ENCODE measurements at regions of chr11 and their contacts with region 1.

Region 1: DNA sequence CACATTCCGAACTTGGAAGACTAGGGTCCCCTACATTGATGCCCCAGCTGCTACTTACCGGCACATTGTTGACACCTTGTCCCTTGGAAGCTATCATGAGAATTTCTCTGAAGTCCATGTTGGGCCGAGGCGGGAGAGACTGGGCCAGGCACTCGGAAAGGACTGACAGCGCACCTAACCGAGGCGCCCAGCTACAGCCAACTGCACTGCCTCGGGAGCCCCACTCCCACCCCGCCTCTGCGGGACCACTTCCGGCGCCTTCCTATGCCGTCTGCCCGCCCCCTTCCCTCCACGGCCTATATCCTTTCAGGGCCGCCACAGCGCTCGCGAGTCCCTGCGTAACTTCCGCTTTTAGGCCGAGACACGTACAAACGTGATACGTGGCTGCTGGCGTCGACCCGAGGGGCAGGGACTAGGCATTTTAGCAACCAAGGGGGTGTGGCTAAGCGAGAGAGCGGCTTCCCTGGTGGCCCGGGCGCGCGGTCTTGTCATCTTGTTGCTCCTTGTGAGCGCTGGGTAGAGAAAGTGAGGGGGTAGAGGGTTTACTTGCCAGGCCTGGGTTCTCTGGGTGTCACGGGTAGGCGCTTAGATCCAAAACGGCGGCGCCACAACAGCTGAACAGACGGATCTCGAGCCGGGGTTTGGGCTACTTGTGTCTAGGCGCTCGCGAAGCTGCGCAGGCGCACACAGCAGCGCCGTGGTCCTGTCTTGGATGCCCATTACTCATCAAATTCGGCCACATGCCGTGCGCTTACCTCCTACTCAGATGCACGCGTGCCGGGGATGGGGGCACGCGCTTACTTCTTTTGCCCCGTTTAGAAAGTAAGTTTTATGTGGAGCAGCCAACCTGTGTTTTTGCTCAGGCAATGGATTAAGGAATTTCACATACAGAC is at the start of gene SPTY2D1:
- DNase-seq: peak; percentile 100
- ATAC-seq: peak; percentile 99
- total RNA-seq, gene SPTY2D1: 9.3 TPM

Region 2: GRCh38 chr11:18395735-18396504 is 238.5 kb before region 1 on chr11:
- intact Hi-C with region 1: loop called (anchors 10 kb)
- DNase-seq: peak; percentile 100
- ATAC-seq: peak; percentile 96

Region 3: GRCh38 chr11:18526521-18527296 is 107.7 kb before region 1 on chr11 and contains the start of gene TSG101:
- intact Hi-C with region 1: loop called (anchors 2 kb)
- DNase-seq: peak; percentile 97
- ATAC-seq: peak; percentile 99
- total RNA-seq, gene TSG101: 62.6 TPM

Region 4: DNA sequence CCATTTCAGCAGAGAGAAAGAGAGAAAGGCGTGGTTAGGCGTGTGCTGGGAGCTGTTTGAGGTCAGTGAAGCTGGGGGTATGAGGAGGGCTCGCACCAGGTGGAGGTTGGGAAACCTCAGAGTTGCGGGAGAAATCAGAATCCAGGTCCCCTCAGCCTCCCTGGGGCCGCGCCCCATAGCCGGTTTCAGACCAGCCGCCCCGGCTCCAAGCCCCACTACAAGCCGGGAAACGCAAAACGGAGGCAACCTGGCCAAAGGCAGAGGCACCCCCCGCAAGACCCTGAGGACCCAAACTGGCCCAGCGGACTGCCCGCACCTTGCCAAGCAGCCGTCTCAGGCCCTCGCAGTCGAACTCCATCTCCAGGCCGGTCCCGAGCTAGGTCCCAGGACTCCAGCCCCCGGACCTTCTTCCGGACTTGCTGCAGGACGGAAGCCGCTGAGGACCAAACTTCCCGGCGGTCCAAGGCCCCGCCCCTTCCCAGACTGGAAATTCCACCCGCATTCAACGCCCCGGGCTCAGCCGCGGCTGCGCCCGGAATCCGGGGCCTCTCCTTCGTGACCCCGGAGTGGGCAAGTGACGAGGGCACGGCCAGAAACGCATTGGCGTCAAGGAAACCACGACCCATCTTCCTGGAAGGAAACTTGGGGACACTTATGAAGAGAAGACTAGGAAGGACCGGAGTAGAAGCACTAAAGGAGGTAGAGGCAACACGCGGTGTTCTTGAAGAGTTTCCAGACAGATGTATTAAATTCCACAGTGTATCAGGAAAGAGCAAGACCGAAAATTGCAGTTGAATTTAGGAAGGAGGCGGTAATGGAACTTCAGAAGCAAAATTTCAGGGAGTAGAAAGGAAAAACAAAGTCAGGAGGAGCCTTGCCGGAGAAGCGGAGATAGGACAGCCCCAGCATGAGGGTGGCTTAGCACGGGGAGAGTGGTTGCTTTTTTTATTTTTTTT is 45.8 kb before region 1 on chr11 and contains the start of gene UEVLD:
- intact Hi-C with region 1: loop called (anchors 1 kb)
- DNase-seq: peak; percentile 93
- ATAC-seq: peak; percentile 98
- total RNA-seq, gene UEVLD: 18.0 TPM

Region 5: GRCh38 chr11:18599739-18600230 is 34.6 kb before region 1 on chr11 and contains the start of gene MISFA:
- intact Hi-C with region 1: no loop called
- DNase-seq: no peak
- ATAC-seq: no peak
- total RNA-seq, gene MISFA: 13.0 TPM

Region 6: GRCh38 chr11:18669220-18669598 is 34.8 kb after region 1 on chr11:
- intact Hi-C with region 1: no loop called
- DNase-seq: no peak
- ATAC-seq: no peak

Region 7: DNA sequence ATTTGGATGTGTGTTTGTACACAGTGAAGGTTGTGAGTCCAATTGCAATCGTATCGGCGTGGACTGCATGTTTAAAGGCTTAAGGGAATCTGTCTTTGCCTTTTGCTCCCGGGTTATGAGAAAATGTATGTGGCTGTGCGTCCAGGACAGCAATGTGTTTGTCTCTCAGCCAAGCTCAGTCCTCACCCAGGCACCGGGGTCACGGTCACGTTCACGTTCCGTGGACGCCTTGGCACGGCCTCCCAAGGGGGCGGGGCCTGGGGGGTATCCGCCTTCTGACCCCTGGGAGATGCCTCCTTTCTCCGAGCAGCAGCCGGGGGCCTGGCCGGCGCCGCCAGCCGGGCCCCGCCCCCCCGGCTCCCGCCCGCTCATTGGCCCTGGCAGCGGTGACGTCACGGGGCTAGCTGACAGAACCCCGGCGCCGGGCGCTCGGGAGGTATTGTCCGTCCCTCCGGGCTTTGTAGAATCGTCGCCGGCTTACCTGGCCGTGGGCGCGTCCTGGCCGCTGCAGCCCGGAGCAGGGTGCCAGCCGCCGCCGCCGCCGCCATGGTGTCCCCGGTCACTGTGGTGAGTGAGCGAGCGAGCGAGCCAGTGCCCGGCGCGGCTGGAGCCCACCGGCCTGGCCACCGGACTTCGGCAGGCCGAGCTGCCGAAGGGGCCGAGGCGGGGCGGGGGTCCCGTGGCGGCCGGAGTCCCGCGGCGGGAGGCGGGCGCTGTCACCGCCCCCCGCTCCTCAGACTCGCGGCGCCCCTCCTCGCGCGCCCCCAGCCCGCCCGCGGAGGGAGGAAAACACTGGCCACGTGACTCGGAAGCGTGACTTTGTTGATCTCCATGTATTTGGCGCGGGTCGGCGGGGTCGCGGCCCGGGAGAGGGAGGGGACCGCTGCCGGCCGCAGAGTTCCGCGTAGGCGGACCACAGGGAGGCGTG is 64.2 kb after region 1 on chr11 and contains the start of gene TMEM86A:
- intact Hi-C with region 1: loop called (anchors 2 kb)
- DNase-seq: peak; percentile 97
- ATAC-seq: peak; percentile 92
- total RNA-seq, gene TMEM86A: 4.6 TPM

Region 8: GRCh38 chr11:18721561-18722292 is 87.3 kb after region 1 on chr11:
- intact Hi-C with region 1: loop called (anchors 5 kb)
- DNase-seq: no peak
- ATAC-seq: peak; percentile 65